PC-9 (cell line): ENCODE measurements at regions of chr4 and their contacts with region 1.

Region 1: GRCh38 chr4:109532182-109532581 is 27.9 kb upstream of the MCUB start:
- DNase-seq: no peak
- H3K4me3 ChIP-seq: no peak overlapping the region
- H3K27ac ChIP-seq: no peak overlapping the region
- H3K4me1 ChIP-seq: no peaks in the 10 kb centered on the region
- H3K27me3 ChIP-seq: no peaks in the 10 kb centered on the region
- CTCF ChIP-seq: no peak

Region 2: DNA sequence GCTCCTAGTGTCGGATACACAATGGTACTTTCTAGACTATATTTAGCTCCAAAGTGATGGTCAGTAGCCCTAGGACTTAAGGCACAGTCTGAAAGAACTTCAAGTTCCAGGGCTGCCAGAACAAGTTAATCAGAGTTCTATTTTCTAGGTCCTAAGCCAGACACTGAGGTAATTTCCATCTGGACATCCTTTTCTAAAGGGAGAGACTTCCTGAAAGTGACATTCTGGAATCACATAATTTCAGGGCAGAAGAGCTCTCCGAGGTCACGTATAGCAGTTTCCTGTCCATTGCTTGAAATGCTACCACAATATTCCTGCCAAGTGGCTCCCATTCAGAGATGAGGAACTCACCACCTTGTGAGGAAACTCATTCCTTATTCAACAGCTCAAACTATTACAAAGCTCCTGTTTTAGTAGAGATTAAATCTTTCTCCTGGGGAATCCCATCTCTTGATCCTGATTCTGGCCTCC is 347.7 kb before region 1 on chr4:
- CTCF ChIA-PET with region 1: no interaction called
- POLR2A ChIA-PET with region 1: no interaction called
- intact Hi-C with region 1: no loop called
- DNase-seq: no peak
- H3K4me3 ChIP-seq: no peak overlapping the region
- H3K27ac ChIP-seq: no peak overlapping the region
- H3K4me1 ChIP-seq: no peaks in the 10 kb centered on the region
- H3K27me3 ChIP-seq: no peaks in the 10 kb centered on the region
- CTCF ChIP-seq: no peak

Region 3: DNA sequence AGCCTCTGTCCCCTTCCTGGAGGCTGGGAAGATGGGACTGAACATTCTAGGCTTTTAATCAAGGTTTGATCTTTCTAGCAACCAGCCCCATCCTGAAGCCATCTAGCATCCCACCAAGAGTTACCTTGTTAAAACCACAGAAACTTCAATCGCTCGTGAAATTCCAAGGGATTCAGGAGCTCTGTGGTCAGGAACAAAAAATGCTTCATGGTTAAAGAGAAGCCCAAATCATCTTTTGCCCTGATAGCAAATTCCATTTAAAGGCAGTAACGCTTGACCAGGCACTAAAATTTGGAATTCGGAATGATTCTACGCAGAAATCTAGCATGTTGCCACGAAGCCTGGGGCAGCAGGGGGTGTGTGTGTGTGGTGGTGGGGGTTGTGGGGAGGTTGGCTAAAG is 123.2 kb after region 1 on chr4:
- CTCF ChIA-PET with region 1: interaction called, 18 read pairs
- POLR2A ChIA-PET with region 1: no interaction called
- intact Hi-C with region 1: no loop called
- DNase-seq: no peak
- H3K4me3 ChIP-seq: no peak overlapping the region
- H3K27ac ChIP-seq: no peak overlapping the region
- H3K4me1 ChIP-seq: no peaks in the 10 kb centered on the region
- H3K27me3 ChIP-seq: no peaks in the 10 kb centered on the region
- CTCF ChIP-seq: no peak